HepG2 (cell line): ENCODE measurements at regions of chr6 and their contacts with region 1.

Region 1: DNA sequence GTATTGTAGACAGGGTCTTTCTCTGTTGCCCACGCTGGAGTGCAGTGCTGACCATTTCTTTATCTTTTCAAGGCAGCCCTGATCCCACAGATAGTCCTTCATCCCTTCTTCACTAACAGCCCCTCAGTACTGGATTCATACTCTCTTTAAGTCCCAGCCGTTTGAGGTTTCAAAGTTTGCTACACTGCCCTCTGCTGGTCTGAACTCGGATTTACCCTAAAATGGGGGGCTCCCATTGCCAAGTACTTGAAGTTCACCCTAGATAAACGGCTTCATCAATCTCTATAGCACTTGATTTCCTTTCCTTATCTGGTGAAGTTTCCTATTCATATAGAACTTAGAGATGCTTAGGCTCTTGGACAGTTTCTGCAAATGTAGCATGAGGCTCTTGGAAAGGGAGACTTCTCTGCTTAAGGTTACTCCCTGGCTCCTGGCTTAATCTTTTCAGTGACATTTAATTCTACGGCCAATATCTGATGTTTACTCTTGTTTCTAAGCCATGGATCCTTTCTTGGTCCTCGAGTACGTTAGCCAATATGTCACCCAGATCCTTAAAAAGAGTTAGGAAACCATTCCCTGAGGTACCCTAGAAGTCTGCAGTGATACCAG is 21.4 kb upstream of the PREP start:
- DNase-seq: peak; percentile 37
- ATAC-seq: peak; percentile 63
- H3K4me3 ChIP-seq: no peak overlapping the region
- H3K27ac ChIP-seq: no peak overlapping the region
- H3K4me1 ChIP-seq: peaks cover 20% of the 10 kb centered on the region
- H3K27me3 ChIP-seq: no peaks in the 10 kb centered on the region
- CTCF ChIP-seq: peak; percentile 73
- EP300 ChIP-seq: no peak
- POLR2A ChIP-seq: no peak
- RAD21 ChIP-seq: no peak

Region 2: DNA sequence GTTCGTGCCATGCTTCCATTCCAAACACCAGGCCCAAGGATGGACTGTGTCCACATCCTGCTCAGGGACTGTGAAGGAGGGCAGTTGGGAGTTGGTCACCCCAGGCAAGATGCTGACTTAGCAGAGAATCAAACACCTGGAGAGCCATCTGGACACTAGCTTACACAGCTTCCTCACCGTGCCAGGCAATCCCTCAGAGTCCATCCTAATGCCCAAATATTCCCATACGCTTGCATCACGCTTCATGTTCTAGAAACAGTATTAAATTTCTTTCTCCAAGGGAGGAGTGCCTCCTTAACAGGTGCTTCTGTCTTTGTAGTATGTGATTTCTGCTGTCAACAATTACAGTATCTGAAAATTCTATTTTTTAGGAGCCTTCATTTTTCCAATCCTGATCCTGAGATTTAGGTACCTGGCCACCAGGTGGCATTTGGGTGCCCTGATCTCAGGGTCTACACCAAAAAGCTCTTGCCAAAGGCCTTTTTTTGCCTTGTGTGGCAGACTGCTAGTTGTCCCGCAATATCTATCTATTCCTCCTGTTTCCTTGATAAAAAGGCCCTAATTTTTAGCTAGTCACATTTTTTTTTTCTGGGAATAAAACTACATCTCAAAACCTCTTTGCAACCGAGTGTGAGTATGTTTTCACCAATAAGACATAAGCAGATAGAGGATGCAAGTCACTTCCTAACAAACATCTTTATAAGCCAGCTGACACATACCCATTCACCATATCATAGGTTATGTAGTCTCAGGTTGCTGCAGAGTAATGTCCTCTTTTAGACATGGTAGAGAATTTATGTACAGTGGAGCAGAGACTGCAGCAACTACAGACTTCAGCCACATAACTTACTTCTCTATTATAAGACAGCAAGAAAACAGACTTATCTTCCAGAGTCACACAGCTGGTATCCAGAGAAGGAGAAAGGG is 106.4 kb before region 1 on chr6:
- CTCF ChIA-PET with region 1: no interaction called
- POLR2A ChIA-PET with region 1: no interaction called
- in situ Hi-C with region 1: no loop called
- intact Hi-C with region 1: loop called (anchors 1 kb)
- DNase-seq: peak; percentile 8
- ATAC-seq: peak; percentile 71
- H3K4me3 ChIP-seq: no peak overlapping the region
- H3K27ac ChIP-seq: no peak overlapping the region
- H3K4me1 ChIP-seq: no peaks in the 10 kb centered on the region; the same call in 1 of the 2 replicates
- H3K27me3 ChIP-seq: no peaks in the 10 kb centered on the region
- CTCF ChIP-seq: peak; percentile 32; the same call in 1 of the 2 replicates
- EP300 ChIP-seq: no peak
- POLR2A ChIP-seq: no peak
- RAD21 ChIP-seq: no peak